Mammary epithelial cell (primary cell): ENCODE measurements at regions of chr1 and their contacts with region 1.

Region 1: GRCh38 chr1:227762233-227762911 is 27.1 kb downstream of the SNAP47 start:
- DNase-seq: peak; percentile 74
- H3K4me3 ChIP-seq: no peak overlapping the region
- H3K27ac ChIP-seq: no peak overlapping the region
- H3K4me1 ChIP-seq: peaks cover 44% of the 10 kb centered on the region
- H3K27me3 ChIP-seq: no peaks in the 10 kb centered on the region
- CTCF ChIP-seq: peak; percentile 74 to 92

Region 2: GRCh38 chr1:227299688-227300087 is 462.7 kb before region 1 on chr1:
- CTCF ChIA-PET with region 1: no interaction called
- dilution Hi-C with region 1: no loop called
- in situ Hi-C with region 1: no loop called
- intact Hi-C with region 1: no loop called
- DNase-seq: no peak
- H3K4me3 ChIP-seq: no peak overlapping the region
- H3K27ac ChIP-seq: peak overlapping the region; percentile 46
- H3K4me1 ChIP-seq: peaks cover 6% of the 10 kb centered on the region
- H3K27me3 ChIP-seq: no peaks in the 10 kb centered on the region
- CTCF ChIP-seq: no peak

Region 3: DNA sequence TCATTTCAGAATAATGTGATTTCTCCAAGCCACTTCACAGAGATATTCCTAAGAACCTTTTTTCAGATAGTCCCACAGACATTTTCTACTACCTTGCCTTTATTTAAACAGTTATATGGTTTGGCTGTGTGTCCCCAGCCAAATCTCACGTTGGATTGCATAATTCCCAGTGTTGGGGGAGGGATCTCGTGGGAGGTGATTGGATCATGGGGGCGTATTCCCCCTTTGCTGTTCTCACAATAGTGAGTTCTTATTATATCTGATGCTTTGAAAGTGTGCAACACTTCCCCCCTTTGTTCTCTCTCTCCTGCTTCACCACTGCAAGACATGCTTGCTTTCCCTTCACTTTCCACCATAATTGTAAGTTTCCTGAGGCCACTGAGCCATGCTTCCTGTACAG is 292.7 kb before region 1 on chr1:
- CTCF ChIA-PET with region 1: no interaction called
- dilution Hi-C with region 1: loop called (anchors 10 kb)
- in situ Hi-C with region 1: no loop called
- intact Hi-C with region 1: no loop called
- DNase-seq: no peak
- H3K4me3 ChIP-seq: no peak overlapping the region
- H3K27ac ChIP-seq: no peak overlapping the region
- H3K4me1 ChIP-seq: no peaks in the 10 kb centered on the region
- H3K27me3 ChIP-seq: peaks cover 4% of the 10 kb centered on the region
- CTCF ChIP-seq: no peak

Region 4: GRCh38 chr1:227489572-227489971 is 272.8 kb before region 1 on chr1:
- CTCF ChIA-PET with region 1: no interaction called
- dilution Hi-C with region 1: no loop called
- in situ Hi-C with region 1: loop called in 1 of 2 experiments (anchors 25 kb)
- intact Hi-C with region 1: no loop called
- DNase-seq: no peak
- H3K4me3 ChIP-seq: no peak overlapping the region
- H3K27ac ChIP-seq: no peak overlapping the region
- H3K4me1 ChIP-seq: no peaks in the 10 kb centered on the region
- H3K27me3 ChIP-seq: no peaks in the 10 kb centered on the region
- CTCF ChIP-seq: no peak

Region 5: DNA sequence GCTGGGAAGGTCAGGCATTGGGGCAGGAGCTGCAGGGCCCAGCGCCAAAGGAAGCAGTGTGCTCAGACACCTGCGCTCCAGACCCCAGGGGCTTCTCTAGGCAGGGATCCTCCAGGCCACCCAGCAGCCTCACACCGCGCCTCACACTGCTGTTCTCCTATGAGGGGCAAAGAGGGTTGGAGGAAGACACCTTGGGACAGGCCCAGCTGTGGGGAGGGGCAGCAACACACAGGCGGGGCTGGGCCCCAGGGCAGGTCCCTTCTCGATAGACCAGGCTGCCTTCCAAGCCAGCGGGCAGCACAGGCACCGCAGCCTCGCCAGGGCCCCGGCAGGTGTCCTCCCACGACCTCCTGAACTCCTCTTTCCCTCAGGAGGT is 32.4 kb after region 1 on chr1:
- CTCF ChIA-PET with region 1: no interaction called
- dilution Hi-C with region 1: loop called (anchors 5 kb)
- in situ Hi-C with region 1: no loop called
- intact Hi-C with region 1: no loop called
- DNase-seq: no peak
- H3K4me3 ChIP-seq: no peak overlapping the region
- H3K27ac ChIP-seq: no peak overlapping the region
- H3K4me1 ChIP-seq: peaks cover 9% of the 10 kb centered on the region
- H3K27me3 ChIP-seq: no peaks in the 10 kb centered on the region
- CTCF ChIP-seq: no peak

Region 6: GRCh38 chr1:227805606-227806197 is 43.3 kb after region 1 on chr1:
- CTCF ChIA-PET with region 1: interaction called, 3 read pairs
- dilution Hi-C with region 1: no loop called
- in situ Hi-C with region 1: no loop called
- intact Hi-C with region 1: loop called (anchors 1 kb)
- DNase-seq: peak; percentile 99
- H3K4me3 ChIP-seq: no peak overlapping the region
- H3K27ac ChIP-seq: peak overlapping the region; percentile 72
- H3K4me1 ChIP-seq: peaks cover 11% of the 10 kb centered on the region
- H3K27me3 ChIP-seq: no peaks in the 10 kb centered on the region
- CTCF ChIP-seq: peak; percentile 23 to 43

Region 7: GRCh38 chr1:227954163-227954850 is 191.9 kb after region 1 on chr1:
- CTCF ChIA-PET with region 1: interaction called, 4 read pairs
- dilution Hi-C with region 1: loop called (anchors 25 kb)
- in situ Hi-C with region 1: loop called (anchors 5 to 10 kb)
- intact Hi-C with region 1: loop called (anchors 1 kb)
- DNase-seq: no peak
- H3K4me3 ChIP-seq: no peak overlapping the region
- H3K27ac ChIP-seq: no peak overlapping the region
- H3K4me1 ChIP-seq: no peaks in the 10 kb centered on the region
- H3K27me3 ChIP-seq: no peaks in the 10 kb centered on the region
- CTCF ChIP-seq: no peak